IMR-90 (cell line): ENCODE measurements at regions of chr4 and their contacts with region 1.

Region 1: GRCh38 chr4:15327311-15328298 is 100.2 kb upstream of the C1QTNF7 start:
- DNase-seq: peak; percentile 94
- ATAC-seq: peak; percentile 72
- H3K4me3 ChIP-seq: no peak overlapping the region
- H3K27ac ChIP-seq: peak overlapping the region; percentile 97
- H3K4me1 ChIP-seq: peaks cover 8% of the 10 kb centered on the region
- H3K27me3 ChIP-seq: no peaks in the 10 kb centered on the region
- CTCF ChIP-seq: no peak
- POLR2A ChIP-seq: no peak
- RAD21 ChIP-seq: no peak

Region 2: GRCh38 chr4:15451866-15452765 is 124.5 kb after region 1 on chr4:
- CTCF ChIA-PET with region 1: interaction called, 11 read pairs
- POLR2A ChIA-PET with region 1: no interaction called
- dilution Hi-C with region 1: no loop called
- in situ Hi-C with region 1: loop called (anchors 10 kb)
- intact Hi-C with region 1: loop called (anchors 1 kb)
- DNase-seq: peak; percentile 98
- ATAC-seq: peak; percentile 89
- H3K4me3 ChIP-seq: no peak overlapping the region
- H3K27ac ChIP-seq: peak overlapping the region; percentile 90
- H3K4me1 ChIP-seq: peaks cover 28% of the 10 kb centered on the region
- H3K27me3 ChIP-seq: no peaks in the 10 kb centered on the region
- CTCF ChIP-seq: no peak
- POLR2A ChIP-seq: no peak
- RAD21 ChIP-seq: no peak

Region 3: DNA sequence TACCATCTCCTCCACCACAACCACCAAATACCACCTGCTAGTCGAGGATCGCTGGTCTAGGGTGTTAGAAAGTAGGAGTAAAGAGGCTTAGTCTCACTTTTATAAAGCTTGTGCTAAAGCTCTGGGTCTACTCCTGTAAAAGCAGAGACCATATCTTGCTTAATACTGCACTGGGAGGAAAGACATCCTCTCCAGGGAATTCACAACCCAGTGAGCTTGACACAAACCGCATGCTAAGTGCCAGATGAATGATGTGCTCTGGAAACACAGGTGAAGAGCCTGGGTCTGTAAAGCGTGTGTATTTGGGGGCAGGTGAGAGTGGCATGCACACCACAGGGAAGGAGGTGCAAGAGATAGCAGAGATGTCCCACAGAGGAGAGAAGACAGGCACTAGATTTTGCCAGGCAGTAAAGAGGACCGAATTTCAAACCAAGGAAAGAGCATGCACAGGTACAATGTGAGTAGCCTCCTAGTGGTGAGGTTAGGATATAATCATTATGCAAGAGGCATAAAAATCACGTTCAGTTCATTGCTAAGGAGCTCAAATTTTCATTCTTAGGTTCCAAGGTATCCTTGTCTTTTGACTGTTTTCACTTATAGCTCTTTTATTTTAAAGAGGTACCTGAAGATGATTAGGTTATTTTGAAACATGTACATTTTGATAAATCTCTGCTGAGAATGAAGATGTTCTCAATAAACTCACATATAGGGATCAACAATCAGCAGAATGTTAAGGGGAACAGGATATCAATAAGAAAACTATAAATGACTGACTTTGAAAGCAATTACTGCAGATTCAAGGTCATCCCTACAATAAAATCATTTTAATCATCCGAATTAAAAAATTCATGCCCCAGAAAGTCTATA is 877.9 kb after region 1 on chr4:
- CTCF ChIA-PET with region 1: no interaction called
- POLR2A ChIA-PET with region 1: no interaction called
- dilution Hi-C with region 1: no loop called
- in situ Hi-C with region 1: no loop called
- intact Hi-C with region 1: loop called (anchors 5 kb)
- DNase-seq: no peak
- ATAC-seq: no peak
- H3K4me3 ChIP-seq: no peak overlapping the region
- H3K27ac ChIP-seq: no peak overlapping the region
- H3K4me1 ChIP-seq: no peaks in the 10 kb centered on the region
- H3K27me3 ChIP-seq: no peaks in the 10 kb centered on the region
- CTCF ChIP-seq: peak; percentile 49
- POLR2A ChIP-seq: no peak
- RAD21 ChIP-seq: peak; percentile 29; the same call in 1 of the 2 replicates